Esophagus squamous epithelium (tissue), 5 donors: ENCODE measurements at regions of chr3 and their contacts with region 1.

Region 1: GRCh38 chr3:127970966-127971592 is 56.0 kb downstream of the KBTBD12 start:
- DNase-seq: no peak
- H3K4me3 ChIP-seq: no peak overlapping the region
- H3K27ac ChIP-seq: no peak overlapping the region
- H3K4me1 ChIP-seq: no peaks in the 10 kb centered on the region
- H3K27me3 ChIP-seq: peaks cover 0 to 17% (median 0%) of the 10 kb centered on the region in 4 donors
- CTCF ChIP-seq: peak; percentile 46 to 76 (median 62)
- POLR2A ChIP-seq: no peak

Region 2: DNA sequence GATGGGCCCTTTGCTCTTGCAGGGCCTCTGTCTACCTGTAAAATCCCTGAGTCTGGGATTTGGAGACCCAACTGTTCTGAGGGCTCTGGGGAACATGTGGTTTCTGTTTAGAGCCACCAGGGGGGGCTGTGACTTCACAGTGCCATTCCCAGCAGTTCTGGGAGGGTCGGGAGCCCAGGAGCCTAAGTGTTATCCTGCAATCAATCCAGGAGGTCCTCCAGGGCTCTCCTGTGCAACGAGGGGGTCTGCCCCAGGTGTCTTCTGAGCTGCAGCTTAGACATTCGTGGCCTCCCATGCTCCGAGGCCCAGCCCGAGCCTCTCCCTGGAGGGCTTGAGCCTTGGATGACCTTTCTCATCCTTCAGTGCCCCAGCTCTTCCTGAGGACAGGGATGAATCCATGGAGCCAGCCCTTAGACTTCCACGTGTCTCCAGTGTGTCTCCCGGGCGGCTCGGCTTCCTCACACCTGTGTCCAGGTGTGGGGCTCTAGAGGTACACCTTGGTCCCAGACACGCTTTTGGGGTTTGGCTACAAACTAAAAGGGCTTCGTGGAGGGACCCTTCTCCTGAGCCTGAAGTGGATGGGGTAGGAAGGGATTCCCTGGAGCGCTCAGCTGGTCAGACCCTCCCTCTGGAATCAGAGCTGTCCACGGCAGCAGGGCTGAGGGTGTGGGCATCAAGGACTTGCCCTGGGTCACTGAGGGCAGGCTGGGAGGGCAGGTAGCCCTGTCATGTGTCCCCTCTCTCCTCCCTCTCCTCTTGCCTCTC is 318.7 kb before region 1 on chr3:
- intact Hi-C with region 1: loop called (anchors 10 kb)
- DNase-seq: no peak
- H3K4me3 ChIP-seq: no peak overlapping the region
- H3K27ac ChIP-seq: no peak overlapping the region
- H3K4me1 ChIP-seq: peaks cover 0 to 6% (median 0%) of the 10 kb centered on the region in 3 donors
- H3K27me3 ChIP-seq: no peaks in the 10 kb centered on the region
- CTCF ChIP-seq: peak; percentile 46 to 84 (median 80)
- POLR2A ChIP-seq: no peak

Region 3: GRCh38 chr3:127800508-127800907 is 170.6 kb before region 1 on chr3:
- intact Hi-C with region 1: no loop called
- DNase-seq: no peak
- H3K4me3 ChIP-seq: no peak overlapping the region
- H3K27ac ChIP-seq: peak overlapping the region in 3 of 4 donors; percentile 19 to 54 (median 38)
- H3K4me1 ChIP-seq: peaks cover 7 to 53% (median 7%) of the 10 kb centered on the region in 3 donors
- H3K27me3 ChIP-seq: no peaks in the 10 kb centered on the region
- CTCF ChIP-seq: no peak
- POLR2A ChIP-seq: no peak

Region 4: DNA sequence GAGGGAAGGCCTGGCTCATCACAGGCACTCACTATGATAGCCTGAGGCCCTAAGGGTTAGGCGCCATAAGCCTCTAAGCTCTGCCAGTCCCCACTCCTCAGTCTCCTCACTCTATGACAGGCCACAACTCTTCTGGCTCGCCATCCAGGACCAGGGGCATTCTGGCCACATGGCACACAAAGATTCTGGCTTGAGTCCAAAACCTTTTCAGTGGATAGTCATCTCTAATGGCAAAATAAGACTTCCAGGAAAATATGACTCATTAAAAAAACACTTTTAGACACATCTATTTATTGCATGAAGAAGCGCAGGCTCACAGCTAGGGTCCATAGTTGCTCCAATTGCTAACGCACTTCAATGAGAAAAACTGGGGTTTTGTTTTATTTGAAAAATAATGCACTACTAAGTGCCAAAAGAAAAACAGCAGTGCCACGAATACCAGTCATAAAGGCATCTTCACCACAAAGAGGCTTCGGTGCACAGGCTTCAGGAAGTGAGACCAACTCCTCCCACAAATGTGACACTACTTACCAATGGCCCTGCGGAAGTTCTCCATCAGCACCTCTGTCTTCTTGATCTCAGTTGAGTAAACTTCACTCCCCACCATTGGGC is 141.4 kb after region 1 on chr3:
- intact Hi-C with region 1: no loop called
- DNase-seq: no peak
- H3K4me3 ChIP-seq: no peak overlapping the region
- H3K27ac ChIP-seq: peak overlapping the region in 2 of 4 donors; percentile 12 to 44
- H3K4me1 ChIP-seq: peaks cover 0 to 15% (median 0%) of the 10 kb centered on the region in 3 donors
- H3K27me3 ChIP-seq: no peaks in the 10 kb centered on the region
- CTCF ChIP-seq: no peak
- POLR2A ChIP-seq: no peak

Region 5: GRCh38 chr3:128763967-128764366 is 792.9 kb after region 1 on chr3:
- intact Hi-C with region 1: no loop called
- DNase-seq: no peak
- H3K4me3 ChIP-seq: no peak overlapping the region
- H3K27ac ChIP-seq: no peak overlapping the region
- H3K4me1 ChIP-seq: peaks cover 0 to 60% (median 25%) of the 10 kb centered on the region in 3 donors
- H3K27me3 ChIP-seq: no peaks in the 10 kb centered on the region
- CTCF ChIP-seq: no peak
- POLR2A ChIP-seq: no peak